ENCODE measurements at regions of chr18 and their contacts with region 1.

Region 1: GRCh38 chr18:3604498-3605408 is 154.8 kb downstream of the TGIF1 start:
- DNase-seq: peak; percentile 91
- H3K4me3 Mint-ChIP-seq: no peak overlapping the region
- H3K27ac Mint-ChIP-seq: no peak overlapping the region
- H3K4me1 Mint-ChIP-seq: no peaks in the 10 kb centered on the region
- H3K27me3 Mint-ChIP-seq: no peaks in the 10 kb centered on the region
- CTCF ChIP-seq: no peak

Region 2: DNA sequence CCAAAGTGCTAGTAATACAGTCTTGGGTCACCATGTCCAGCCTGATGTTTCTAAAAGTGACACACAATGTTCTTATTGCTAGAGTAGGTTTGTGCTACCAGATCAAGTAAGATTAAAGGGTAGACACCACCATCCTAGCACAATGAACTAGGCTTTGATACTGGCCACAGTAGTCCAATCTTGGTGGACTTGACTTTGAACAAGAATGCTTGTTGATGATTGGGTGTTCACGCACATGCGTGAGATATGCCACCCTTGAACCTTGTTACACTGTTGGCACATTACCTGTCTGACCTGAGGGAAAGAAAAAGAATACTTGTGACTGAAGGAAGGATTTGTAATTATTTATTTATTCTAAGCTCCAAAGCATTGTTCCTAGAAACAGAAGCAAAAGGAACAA is 830.1 kb before region 1 on chr18:
- CTCF ChIA-PET with region 1: no interaction called
- POLR2A ChIA-PET with region 1: no interaction called
- intact Hi-C with region 1: no loop called
- DNase-seq: no peak
- H3K4me3 Mint-ChIP-seq: no peak overlapping the region
- H3K27ac Mint-ChIP-seq: no peak overlapping the region
- H3K4me1 Mint-ChIP-seq: no peaks in the 10 kb centered on the region
- H3K27me3 Mint-ChIP-seq: no peaks in the 10 kb centered on the region
- CTCF ChIP-seq: no peak

Region 3: GRCh38 chr18:3261371-3262246 is 343.1 kb before region 1 on chr18 and contains the start of gene MYL12B:
- CTCF ChIA-PET with region 1: no interaction called
- POLR2A ChIA-PET with region 1: interaction called, 27 read pairs
- intact Hi-C with region 1: no loop called
- DNase-seq: peak; percentile 78
- H3K4me3 Mint-ChIP-seq: peak within 1 kb of the TSS; percentile 80
- H3K27ac Mint-ChIP-seq: peak within 1 kb of the TSS; percentile 82
- H3K4me1 Mint-ChIP-seq: peaks cover 43% of the 10 kb centered on the region
- H3K27me3 Mint-ChIP-seq: no peaks in the 10 kb centered on the region
- CTCF ChIP-seq: no peak
- total RNA-seq, gene MYL12B: 175 and 229 TPM in 2 replicates

Region 4: DNA sequence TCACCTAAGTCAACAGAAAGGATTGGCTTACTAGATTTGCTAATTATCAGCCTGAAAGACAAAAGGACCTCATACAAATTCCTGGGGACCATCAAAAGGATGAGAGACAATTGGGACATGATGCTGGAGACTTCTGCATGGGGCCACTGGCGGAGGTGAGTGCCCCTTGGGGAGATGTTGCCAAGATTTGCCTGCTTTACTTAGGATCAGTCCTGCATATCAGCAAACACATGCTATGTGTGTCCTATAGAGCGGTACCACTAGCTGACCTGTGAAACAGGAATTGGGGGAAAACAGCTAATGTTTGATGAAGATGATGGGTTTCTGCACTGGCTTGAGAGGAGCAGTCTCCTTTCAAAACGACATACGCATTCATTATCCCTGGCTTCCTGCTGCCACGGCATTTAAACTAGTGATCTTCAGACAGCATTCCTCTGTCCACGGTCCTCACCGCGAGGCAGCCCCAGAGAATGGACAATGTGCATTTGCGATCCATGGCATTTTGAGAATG is 50.6 kb before region 1 on chr18:
- CTCF ChIA-PET with region 1: no interaction called
- POLR2A ChIA-PET with region 1: no interaction called
- intact Hi-C with region 1: no loop called
- DNase-seq: no peak
- H3K4me3 Mint-ChIP-seq: no peak overlapping the region
- H3K27ac Mint-ChIP-seq: no peak overlapping the region
- H3K4me1 Mint-ChIP-seq: peaks cover 6% of the 10 kb centered on the region
- H3K27me3 Mint-ChIP-seq: no peaks in the 10 kb centered on the region
- CTCF ChIP-seq: no peak

Region 5: DNA sequence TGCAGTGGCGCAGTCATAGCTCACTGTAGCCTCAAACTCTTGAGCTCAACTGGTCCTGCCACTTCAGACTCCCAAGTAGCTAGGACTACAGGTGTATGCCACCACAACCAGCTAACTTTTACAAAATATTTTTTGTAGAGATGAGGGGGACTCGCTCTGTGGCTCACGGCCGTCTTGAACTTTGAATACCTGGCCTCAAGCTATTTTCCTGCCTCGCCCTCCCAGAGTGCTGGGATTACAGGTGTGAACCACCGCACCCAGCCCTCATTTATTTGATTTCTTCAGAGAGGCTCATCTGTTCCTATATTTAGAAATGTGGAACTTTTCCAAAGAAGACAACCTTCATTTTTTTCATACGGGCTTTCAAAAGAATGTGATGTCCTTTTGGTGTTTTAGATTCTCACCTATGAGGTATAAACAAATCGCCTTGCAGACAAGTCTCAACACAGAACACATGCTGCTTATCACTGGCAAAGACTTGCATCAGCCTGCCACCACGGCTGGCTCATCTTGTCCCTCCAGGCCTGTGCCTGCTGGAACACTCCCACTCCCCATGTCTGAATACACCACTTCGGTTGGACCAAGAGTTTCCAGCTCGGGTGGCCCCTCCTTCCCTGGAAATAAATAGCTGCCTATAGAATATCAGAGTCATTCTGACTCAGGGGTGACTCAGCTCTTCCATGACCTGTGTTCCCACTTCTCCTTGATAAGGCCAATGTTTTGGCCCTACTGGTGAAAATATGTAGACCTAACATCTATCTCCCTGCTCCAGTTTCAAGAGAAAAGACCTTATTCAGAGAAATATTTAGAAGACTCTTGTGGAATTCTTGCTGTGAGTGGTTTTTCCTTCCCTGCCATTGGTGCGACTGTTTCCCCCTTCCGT is 47.9 kb after region 1 on chr18:
- CTCF ChIA-PET with region 1: interaction called, 6 read pairs
- POLR2A ChIA-PET with region 1: interaction called, 108 read pairs
- intact Hi-C with region 1: loop called (anchors 1 kb)
- DNase-seq: peak; percentile 99
- H3K4me3 Mint-ChIP-seq: peak overlapping the region; percentile 4
- H3K27ac Mint-ChIP-seq: peak overlapping the region; percentile 91
- H3K4me1 Mint-ChIP-seq: peaks cover 41% of the 10 kb centered on the region
- H3K27me3 Mint-ChIP-seq: no peaks in the 10 kb centered on the region
- CTCF ChIP-seq: peak; percentile 13

Measured in MCF 10A (cell line).